ENCODE measurements at regions of chr7 and their contacts with region 1.

Region 1: DNA sequence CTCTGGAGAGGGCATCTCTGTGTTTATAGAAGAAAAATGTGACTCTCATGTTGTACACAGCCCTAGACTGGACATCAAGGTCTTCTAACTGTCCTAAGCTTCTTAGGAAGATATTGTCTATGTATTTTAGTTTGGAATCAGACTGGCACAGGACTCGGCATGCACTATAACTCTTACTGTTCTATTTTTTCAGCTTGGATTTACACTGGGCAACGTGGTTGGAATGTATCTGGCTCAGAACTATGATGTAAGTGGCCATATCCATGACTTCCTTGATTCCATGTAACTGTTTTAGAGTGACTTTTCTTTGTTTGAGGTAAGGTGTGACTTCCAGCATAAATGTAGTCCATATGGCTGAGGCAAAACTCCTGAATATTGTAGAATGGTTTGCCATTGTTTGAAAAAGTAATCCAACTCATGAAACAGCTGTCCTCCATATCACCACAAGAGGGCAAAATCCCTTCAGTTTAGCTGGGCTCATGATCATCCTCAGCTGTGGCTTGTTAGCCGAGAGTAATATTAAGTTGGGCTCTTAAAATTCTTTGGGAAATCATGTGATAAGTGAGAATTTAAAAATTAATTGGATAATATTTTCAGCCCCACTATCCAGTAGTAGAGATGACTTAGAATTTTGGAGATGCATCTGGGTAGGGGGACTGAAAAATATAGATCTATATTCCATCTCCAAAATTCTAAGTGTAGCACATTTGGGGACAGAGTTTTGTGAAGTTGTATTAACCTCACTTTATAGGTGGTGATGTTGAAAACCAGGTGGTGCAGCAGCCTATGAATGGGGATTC is 10.4 kb downstream of the STMP1 start:
- DNase-seq: peak; percentile 57 to 79 (median 72)
- H3K4me3 ChIP-seq: no peak overlapping the region
- H3K27ac ChIP-seq: no peak overlapping the region
- H3K4me1 ChIP-seq: peaks cover 0 to 5% (median 0%) of the 10 kb centered on the region in 4 experiments
- H3K27me3 ChIP-seq: no peaks in the 10 kb centered on the region

Region 2: GRCh38 chr7:135662373-135663114 is 10.2 kb before region 1 on chr7 and contains the start of gene STMP1:
- CTCF ChIA-PET with region 1: interaction called, 73 read pairs
- POLR2A ChIA-PET with region 1: no interaction called
- DNase-seq: peak; percentile 96 to 97 (median 97)
- H3K4me3 ChIP-seq: peak within 1 kb of the TSS; percentile 79 to 97 (median 96)
- H3K27ac ChIP-seq: peak within 1 kb of the TSS; percentile 86 to 91
- H3K4me1 ChIP-seq: peaks cover 24 to 59% (median 51%) of the 10 kb centered on the region in 4 experiments
- H3K27me3 ChIP-seq: no peaks in the 10 kb centered on the region

Region 3: DNA sequence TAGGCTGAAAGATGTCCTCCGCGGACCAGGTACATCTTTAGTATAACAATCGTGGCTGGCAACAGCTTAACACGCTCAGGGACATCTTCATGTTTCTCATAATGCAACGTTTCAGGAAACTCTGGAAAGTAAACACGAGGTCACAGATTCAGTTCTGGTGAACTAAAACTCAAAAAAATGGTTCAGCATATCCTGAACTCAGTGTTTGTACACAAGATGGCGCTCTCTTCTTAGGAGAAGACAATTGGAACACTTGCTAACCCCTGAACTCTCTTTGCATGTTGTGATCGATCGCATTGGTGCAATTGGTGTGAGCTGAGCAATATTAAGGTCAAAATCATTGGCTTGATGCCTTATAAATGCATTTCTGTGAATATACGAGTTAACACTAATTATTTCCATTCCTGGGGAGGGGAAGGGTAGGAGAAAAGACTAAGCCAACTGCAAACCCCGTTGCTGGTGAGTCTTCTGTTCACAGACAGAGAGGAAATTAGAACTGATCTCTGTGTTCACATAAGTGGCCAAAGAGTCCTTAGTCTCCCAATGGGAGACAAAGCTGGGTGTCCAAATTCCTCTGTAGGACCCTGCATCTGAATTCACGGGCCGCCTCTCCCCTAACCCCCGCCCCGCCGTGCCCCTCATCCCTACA is 128.4 kb after region 1 on chr7:
- CTCF ChIA-PET with region 1: interaction called, 12 read pairs
- POLR2A ChIA-PET with region 1: no interaction called
- DNase-seq: peak; percentile 69 to 77 (median 71)
- H3K4me3 ChIP-seq: peak overlapping the region in 4 of 7 experiments; percentile 38 to 61 (median 54)
- H3K27ac ChIP-seq: no peak overlapping the region
- H3K4me1 ChIP-seq: peaks cover 2 to 6% (median 4%) of the 10 kb centered on the region in 4 experiments
- H3K27me3 ChIP-seq: peaks cover 0 to 5% (median 0%) of the 10 kb centered on the region in 5 experiments

Region 4: GRCh38 chr7:136009488-136010079 is 336.8 kb after region 1 on chr7:
- CTCF ChIA-PET with region 1: interaction called, 14 read pairs
- POLR2A ChIA-PET with region 1: no interaction called
- DNase-seq: peak; percentile 48 to 66 (median 52)
- H3K4me3 ChIP-seq: no peak overlapping the region
- H3K27ac ChIP-seq: no peak overlapping the region
- H3K4me1 ChIP-seq: peaks cover 0 to 10% (median 3%) of the 10 kb centered on the region in 4 experiments
- H3K27me3 ChIP-seq: peaks cover 0 to 2% (median 0%) of the 10 kb centered on the region in 5 experiments